Left cardiac atrium (tissue), 4 donors: ENCODE measurements at regions of chr12 and their contacts with region 1.

Region 1: DNA sequence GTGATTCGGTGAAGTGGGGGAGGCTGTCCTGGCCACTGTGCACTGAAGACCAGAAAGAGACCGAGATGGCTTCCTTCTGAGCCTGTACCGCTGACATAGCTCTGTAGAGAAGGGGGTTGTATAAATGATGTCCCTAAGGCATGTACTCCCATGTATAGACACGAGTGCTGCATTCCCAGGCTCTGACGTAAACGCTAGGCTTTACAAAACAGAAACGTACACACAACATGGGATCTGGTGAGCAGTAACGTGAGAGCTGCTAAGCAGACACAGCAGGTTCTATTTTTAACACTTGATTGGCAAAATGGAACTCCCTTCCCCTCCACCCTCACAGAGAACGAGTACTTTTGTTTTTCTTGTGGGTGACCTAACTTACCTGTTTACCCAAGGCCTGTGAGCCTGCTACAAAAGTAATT is 35.9 kb downstream of the ACADS start:
- DNase-seq: no peak
- ATAC-seq: peak; percentile 56 to 62

Region 2: DNA sequence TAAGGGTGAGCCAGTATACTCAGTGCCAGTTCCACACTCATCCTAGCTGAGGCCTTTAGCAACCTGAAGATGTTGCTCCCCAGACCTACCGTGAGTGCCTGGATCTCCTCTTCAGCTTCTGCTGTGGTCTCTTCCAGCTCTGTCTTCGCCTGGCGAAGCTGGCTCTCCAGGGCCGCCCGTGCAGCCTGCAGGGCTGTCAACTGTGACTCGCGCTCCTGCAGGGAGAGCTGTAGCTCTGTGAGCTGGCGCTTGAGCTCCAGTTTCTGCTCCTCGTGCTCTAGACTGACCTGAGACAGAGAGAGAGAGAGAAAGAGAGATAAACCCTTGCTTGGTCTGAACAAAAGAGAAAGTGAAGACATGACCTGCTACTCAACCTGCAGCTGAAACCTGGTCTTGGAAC is 1009.6 kb before region 1 on chr12:
- intact Hi-C with region 1: no loop called
- DNase-seq: no peak
- ATAC-seq: no peak

Region 3: GRCh38 chr12:120588948-120589930 is 172.3 kb before region 1 on chr12:
- intact Hi-C with region 1: no loop called
- DNase-seq: peak; percentile 76
- ATAC-seq: peak; percentile 72 to 83

Region 4: DNA sequence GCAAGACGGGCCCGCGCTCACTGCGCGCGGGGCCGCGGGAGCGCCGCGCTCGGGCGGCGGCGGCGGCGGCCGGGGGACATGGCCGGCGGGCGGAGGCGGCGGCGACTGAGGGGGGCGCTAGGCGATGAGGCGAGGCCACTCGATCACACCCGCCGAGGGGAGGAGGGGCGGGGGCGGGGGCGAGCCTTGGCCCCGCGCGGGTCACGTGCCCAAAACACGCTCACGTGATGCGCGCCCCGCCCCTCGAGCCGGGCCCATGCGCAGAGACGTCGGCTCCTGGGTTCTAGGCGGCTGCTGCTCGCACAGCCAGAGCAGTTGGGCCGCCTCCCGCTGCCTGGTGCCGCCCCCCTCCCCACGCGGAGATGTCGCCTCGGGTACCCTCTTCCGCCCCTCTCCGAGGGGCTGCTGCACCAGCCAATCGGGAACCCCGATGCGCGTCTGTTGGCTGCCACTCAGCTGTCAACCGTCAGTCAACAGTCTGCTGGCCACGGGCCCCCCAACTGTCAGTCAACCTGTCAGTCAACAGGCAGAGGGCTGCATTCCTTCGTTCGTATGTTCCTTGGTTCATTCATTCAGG is 142.8 kb after region 1 on chr12 and contains the start of gene SPPL3:
- intact Hi-C with region 1: loop called in 1 of 2 experiments (anchors 10 kb)
- DNase-seq: peak; percentile 95
- ATAC-seq: peak; percentile 95
- total RNA-seq, gene SPPL3: 27.6 to 29.7 TPM